CD4-positive, alpha-beta T cell (primary cell): ENCODE measurements at regions of chrX and their contacts with region 1.

Region 1: DNA sequence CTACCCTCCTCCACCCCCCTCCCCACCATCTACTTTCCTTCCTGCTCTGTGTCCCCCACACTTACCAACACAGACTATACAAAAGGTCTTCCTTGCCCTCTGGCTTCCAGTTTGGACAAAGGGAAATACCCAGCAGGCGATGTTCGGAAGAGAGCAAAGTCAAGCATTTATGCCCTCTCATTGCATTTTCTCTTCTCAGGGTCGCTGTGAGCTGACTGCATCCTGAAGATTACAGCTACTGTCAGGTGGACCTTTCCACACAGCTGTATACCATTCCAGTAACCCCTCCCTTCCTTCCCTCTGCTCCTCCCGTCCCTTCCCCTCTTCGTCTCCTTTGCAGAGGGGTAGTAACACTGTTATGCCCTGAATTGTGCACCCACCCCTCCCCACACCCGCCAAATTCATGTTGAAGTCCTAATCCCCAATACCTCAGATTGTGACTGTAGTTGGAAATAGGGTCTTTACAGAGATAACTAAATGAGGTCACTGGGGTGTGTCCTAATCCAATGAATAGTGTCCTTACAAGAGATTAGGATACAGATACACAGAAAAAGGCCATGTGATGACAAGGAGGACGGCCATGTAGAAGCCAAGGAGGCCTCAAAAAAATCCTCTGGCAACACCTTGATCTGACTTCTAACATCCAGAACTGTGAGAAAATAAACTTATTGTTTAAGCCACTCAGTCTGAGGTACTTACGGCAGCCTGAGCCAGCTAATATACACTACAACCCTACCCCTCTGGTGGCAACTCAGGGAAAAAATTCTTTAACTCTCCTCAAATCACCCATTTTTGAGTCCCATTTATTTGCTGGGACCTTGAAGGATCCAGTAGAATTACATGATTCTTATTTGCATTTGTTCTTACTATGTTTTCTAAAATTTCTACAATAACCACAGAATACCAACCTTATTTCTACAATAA is 11.7 kb downstream of the MORF4L2 start:
- DNase-seq: no peak
- ATAC-seq: no peak
- H3K4me3 ChIP-seq: no peak overlapping the region
- H3K4me3 Mint-ChIP-seq: no peak overlapping the region
- H3K27ac ChIP-seq: no peak overlapping the region
- H3K27ac Mint-ChIP-seq: no peak overlapping the region
- H3K4me1 ChIP-seq: no peaks in the 10 kb centered on the region
- H3K4me1 Mint-ChIP-seq: peaks cover 5% of the 10 kb centered on the region
- H3K27me3 ChIP-seq: no peaks in the 10 kb centered on the region
- H3K27me3 Mint-ChIP-seq: no peaks in the 10 kb centered on the region
- CTCF ChIP-seq: no peak

Region 2: GRCh38 chrX:101925733-101926132 is 1749.1 kb before region 1 on chrX:
- CTCF ChIA-PET with region 1: no interaction called
- POLR2A ChIA-PET with region 1: no interaction called
- intact Hi-C with region 1: loop called in 1 of 2 experiments (anchors 10 kb)
- DNase-seq: no peak
- ATAC-seq: no peak
- H3K4me3 ChIP-seq: no peak overlapping the region
- H3K4me3 Mint-ChIP-seq: no peak overlapping the region
- H3K27ac ChIP-seq: no peak overlapping the region
- H3K27ac Mint-ChIP-seq: no peak overlapping the region
- H3K4me1 ChIP-seq: no peaks in the 10 kb centered on the region
- H3K4me1 Mint-ChIP-seq: peaks cover 12% of the 10 kb centered on the region
- H3K27me3 ChIP-seq: no peaks in the 10 kb centered on the region
- H3K27me3 Mint-ChIP-seq: no peaks in the 10 kb centered on the region
- CTCF ChIP-seq: no peak

Region 3: GRCh38 chrX:103629318-103630170 is 45.2 kb before region 1 on chrX:
- CTCF ChIA-PET with region 1: no interaction called
- POLR2A ChIA-PET with region 1: no interaction called
- intact Hi-C with region 1: no loop called
- DNase-seq: peak in 5 of 14 experiments; percentile 9 to 45 (median 26)
- ATAC-seq: peak; percentile 59
- H3K4me3 ChIP-seq: peak overlapping the region; percentile 84
- H3K4me3 Mint-ChIP-seq: peak overlapping the region; percentile 94
- H3K27ac ChIP-seq: no peak overlapping the region
- H3K27ac Mint-ChIP-seq: peak overlapping the region; percentile 65
- H3K4me1 ChIP-seq: peaks cover 9% of the 10 kb centered on the region
- H3K4me1 Mint-ChIP-seq: peaks cover 27% of the 10 kb centered on the region
- H3K27me3 ChIP-seq: no peaks in the 10 kb centered on the region
- H3K27me3 Mint-ChIP-seq: no peaks in the 10 kb centered on the region
- CTCF ChIP-seq: no peak